ENCODE measurements at regions of chr1 and their contacts with region 1.

Region 1: GRCh38 chr1:13950637-13951036 is 250.6 kb downstream of the PRDM2 start:
- DNase-seq: no peak
- H3K4me3 ChIP-seq: no peak overlapping the region
- H3K27ac ChIP-seq: peak overlapping the region in 1 of 5 donors; percentile 74
- H3K4me1 ChIP-seq: peaks cover 0 to 9% of the 10 kb centered on the region in 2 donors
- H3K27me3 ChIP-seq: no peaks in the 10 kb centered on the region
- CTCF ChIP-seq: peak in 1 of 6 experiments; percentile 2
- POLR2A ChIP-seq: no peak

Region 2: DNA sequence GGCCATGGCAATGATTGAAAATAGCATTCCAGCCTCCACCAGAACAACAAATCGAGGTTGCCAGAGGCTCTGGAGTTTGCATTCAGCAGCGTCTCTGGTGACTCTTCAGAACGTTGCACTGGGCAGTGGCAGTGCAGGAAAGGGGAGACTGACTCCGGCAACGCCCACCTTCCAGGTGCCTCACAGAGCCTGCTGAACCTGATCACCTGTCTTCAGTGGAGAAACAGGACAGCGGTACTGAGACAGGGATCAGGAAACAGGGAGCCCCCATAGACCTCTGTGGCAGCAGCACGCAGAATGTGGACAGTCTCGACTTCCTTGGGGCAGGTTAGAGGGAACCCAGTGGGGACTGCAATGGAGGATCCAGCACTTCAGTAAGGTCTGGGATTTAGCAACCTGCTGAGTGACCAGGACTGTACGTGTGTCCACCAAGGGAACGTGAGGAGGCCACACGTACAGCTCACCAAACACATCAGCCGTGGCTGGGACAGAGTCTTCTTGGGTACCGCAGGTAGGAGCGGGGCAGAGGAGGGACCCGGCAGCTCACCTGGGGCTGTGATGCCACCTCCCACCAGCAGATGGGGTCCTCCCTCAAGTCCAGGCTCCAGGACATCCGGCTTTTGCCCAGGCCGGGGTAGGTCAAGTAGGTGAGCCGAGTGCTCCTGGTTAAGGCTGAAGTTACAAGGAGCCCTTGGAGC is 122.0 kb before region 1 on chr1:
- intact Hi-C with region 1: loop called in 1 of 2 experiments (anchors 10 kb)
- DNase-seq: peak in 3 of 7 donors; percentile 21 to 56 (median 40)
- H3K4me3 ChIP-seq: no peak overlapping the region
- H3K27ac ChIP-seq: no peak overlapping the region
- H3K4me1 ChIP-seq: no peaks in the 10 kb centered on the region
- H3K27me3 ChIP-seq: no peaks in the 10 kb centered on the region
- CTCF ChIP-seq: peak; percentile 21 to 51 (median 37)
- POLR2A ChIP-seq: no peak

Region 3: DNA sequence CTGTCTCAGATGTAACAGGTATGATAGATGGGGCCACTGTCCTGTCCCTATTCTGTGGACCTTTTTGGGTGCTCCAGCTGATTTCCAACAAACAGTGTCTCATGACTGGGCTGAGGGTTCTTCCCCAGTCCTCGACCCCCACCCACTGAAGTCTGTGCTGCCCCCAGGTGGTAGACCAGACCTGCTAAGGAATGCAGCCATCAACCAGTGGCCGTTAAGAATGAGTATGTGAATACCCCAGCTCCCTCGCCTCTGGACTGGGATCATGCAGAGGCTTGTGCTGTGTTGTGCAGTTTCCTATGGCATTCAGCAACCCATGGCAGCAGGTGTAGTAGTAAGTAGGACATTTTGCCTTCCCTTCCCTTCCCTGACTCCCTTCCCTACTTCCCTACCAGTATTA is 464.8 kb after region 1 on chr1:
- intact Hi-C with region 1: no loop called
- DNase-seq: no peak
- H3K4me3 ChIP-seq: no peak overlapping the region
- H3K27ac ChIP-seq: no peak overlapping the region
- H3K4me1 ChIP-seq: no peaks in the 10 kb centered on the region
- H3K27me3 ChIP-seq: no peaks in the 10 kb centered on the region
- CTCF ChIP-seq: no peak
- POLR2A ChIP-seq: no peak